Breast epithelium (tissue), 4 donors: ENCODE measurements at regions of chr2 and their contacts with region 1.

Region 1: GRCh38 chr2:65522922-65523321 is 90.5 kb upstream of the SPRED2 start:
- DNase-seq: no peak
- H3K4me3 ChIP-seq: no peak overlapping the region
- H3K27ac ChIP-seq: no peak overlapping the region
- H3K4me1 ChIP-seq: no peaks in the 10 kb centered on the region
- H3K27me3 ChIP-seq: no peaks in the 10 kb centered on the region
- CTCF ChIP-seq: no peak
- POLR2A ChIP-seq: no peak

Region 2: DNA sequence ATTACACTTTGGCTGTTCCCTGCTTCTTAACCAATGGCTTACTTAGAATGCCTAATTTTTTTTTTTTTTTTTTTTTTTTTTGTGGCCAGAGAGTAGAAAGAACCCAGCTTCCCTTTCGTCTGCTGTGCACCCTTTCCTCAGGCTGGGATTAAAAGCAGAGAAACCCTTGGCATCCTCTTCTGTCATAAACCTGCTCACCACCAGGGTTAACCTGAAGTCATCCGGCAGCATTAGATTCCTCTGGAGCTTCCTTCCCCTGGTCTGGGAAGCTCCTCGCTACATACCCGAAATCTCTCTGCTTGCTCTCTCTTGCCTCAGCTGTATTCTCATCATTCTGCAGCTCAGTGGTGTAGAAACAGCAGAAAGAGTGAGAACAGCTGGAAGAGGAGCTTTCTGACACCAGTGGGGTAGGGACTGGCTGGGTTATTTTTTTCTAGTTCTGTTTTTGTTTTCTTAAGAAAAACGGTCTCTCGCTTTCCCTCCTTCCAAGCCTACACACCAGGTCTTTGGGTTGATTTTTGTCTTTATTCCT is 573.0 kb after region 1 on chr2:
- intact Hi-C with region 1: loop called (anchors 5 kb)
- DNase-seq: no peak
- H3K4me3 ChIP-seq: no peak overlapping the region
- H3K27ac ChIP-seq: no peak overlapping the region
- H3K4me1 ChIP-seq: no peaks in the 10 kb centered on the region
- H3K27me3 ChIP-seq: no peaks in the 10 kb centered on the region
- CTCF ChIP-seq: no peak
- POLR2A ChIP-seq: no peak